Right ventricle myocardium superior (tissue), 1 donor: ENCODE measurements at regions of chr6 and their contacts with region 1.

Region 1: GRCh38 chr6:99514089-99514488 is 1.1 kb downstream of the USP45 start:
- DNase-seq: no peak
- ATAC-seq: no peak

Region 2: DNA sequence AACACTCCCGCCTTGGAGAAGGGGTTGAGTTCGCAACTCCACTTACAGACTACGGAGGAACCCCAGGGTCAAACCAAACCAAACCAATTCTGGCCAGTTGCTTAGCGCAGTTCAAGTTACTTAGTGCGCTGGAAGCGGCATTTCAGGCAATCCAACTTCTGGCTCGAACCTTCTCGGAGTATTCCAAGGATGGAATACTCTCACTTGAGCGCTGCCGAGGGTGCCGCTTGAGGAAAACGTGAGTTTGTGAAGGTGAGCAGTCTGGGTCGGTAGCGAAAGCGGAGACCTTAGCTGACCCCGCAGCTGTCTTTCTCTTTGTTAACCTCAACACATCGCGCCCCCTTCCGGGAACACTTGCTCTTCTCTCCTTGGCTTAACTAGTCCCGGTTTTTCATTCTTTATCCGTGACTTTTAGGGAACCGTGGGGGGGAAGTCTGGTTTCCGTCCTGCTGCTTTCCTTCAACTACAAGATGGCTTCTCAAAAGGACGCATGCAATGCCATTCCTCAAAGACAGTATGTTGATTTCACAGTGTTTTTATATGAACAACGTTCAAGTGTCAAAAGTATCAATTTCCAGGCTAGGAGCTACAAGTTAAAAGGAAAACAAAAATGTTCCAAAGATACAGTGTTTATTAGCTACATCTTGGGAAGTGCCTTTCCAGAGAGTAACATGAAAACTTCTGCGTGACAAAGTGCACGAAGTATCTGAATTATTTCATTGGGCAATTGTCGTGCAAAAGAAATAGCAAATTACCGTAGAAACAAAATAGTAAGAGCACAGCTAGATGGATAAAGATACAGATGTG is 88.2 kb before region 1 on chr6:
- intact Hi-C with region 1: loop called (anchors 10 kb)
- DNase-seq: peak; percentile 93
- ATAC-seq: peak; percentile 89